ENCODE measurements at regions of chr7 and their contacts with region 1.

Region 1: GRCh38 chr7:151351027-151351426 is 9.4 kb downstream of the NUB1 start:
- DNase-seq: no peak

Region 2: DNA sequence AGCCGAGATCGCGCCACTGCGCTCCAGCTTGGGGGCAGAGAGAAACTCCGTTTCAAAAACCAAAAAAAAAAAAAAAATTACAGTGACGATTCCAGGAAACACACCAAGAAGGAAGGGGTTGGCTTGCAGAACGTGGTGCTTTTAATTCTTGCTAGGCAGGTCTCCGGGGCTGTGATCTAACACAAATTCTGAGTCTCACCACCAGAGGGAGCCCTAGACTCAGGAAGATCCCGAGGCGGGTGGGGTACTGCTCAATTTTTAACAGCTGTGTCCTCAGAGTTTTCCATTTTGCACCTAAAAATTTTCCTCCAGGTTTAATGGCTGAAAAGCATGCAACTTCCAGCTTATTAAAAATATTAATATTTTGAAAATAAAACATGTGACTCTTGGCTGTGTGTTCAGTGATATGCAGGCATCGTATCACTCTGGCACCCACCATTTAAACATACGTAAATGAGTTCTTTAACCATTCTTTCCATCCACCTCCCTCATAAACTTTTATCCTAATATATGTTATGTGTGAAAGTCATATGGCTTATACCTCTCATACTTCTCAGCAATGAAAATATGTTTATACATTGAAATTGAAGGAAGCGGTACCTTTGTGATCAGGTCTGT is 35.9 kb before region 1 on chr7:
- intact Hi-C with region 1: loop called (anchors 1 kb)
- DNase-seq: peak; percentile 83

Region 3: GRCh38 chr7:151439855-151440798 is 89.1 kb after region 1 on chr7 and contains the start of gene CRYGN:
- intact Hi-C with region 1: no loop called
- DNase-seq: no peak
- total RNA-seq, gene CRYGN: not detected